Activated B cell treated with CpG ODN at 0.5 μM for 24 hours (primary cell): ENCODE measurements at regions of chr4 and their contacts with region 1.

Region 1: GRCh38 chr4:163544407-163545038 is 50.0 kb downstream of the TMA16 start:
- DNase-seq: peak; percentile 59
- ATAC-seq: peak; percentile 93
- H3K4me3 Mint-ChIP-seq: no peak overlapping the region
- H3K27ac Mint-ChIP-seq: no peak overlapping the region
- H3K4me1 Mint-ChIP-seq: peaks cover 30% of the 10 kb centered on the region
- H3K27me3 Mint-ChIP-seq: no peaks in the 10 kb centered on the region
- CTCF ChIP-seq: peak; percentile 58

Region 2: GRCh38 chr4:163048447-163048846 is 496.1 kb before region 1 on chr4:
- CTCF ChIA-PET with region 1: no interaction called
- POLR2A ChIA-PET with region 1: no interaction called
- intact Hi-C with region 1: loop called (anchors 1 kb)
- DNase-seq: no peak
- ATAC-seq: no peak
- H3K4me3 Mint-ChIP-seq: no peak overlapping the region
- H3K27ac Mint-ChIP-seq: no peak overlapping the region
- H3K4me1 Mint-ChIP-seq: no peaks in the 10 kb centered on the region
- H3K27me3 Mint-ChIP-seq: peaks cover 4% of the 10 kb centered on the region
- CTCF ChIP-seq: no peak

Region 3: GRCh38 chr4:163332500-163333406 is 211.8 kb before region 1 on chr4 and contains the start of gene NPY1R:
- CTCF ChIA-PET with region 1: no interaction called
- POLR2A ChIA-PET with region 1: no interaction called
- intact Hi-C with region 1: loop called (anchors 2 kb)
- DNase-seq: no peak
- ATAC-seq: no peak
- H3K4me3 Mint-ChIP-seq: peak within 1 kb of the TSS; percentile 71
- H3K27ac Mint-ChIP-seq: no peak within 1 kb of the TSS
- H3K4me1 Mint-ChIP-seq: peaks cover 18% of the 10 kb centered on the region
- H3K27me3 Mint-ChIP-seq: peaks cover 46% of the 10 kb centered on the region
- CTCF ChIP-seq: no peak
- total RNA-seq, gene NPY1R: not detected in 2 replicates

Region 4: GRCh38 chr4:163523791-163524365 is 20.6 kb before region 1 on chr4:
- CTCF ChIA-PET with region 1: interaction called, 11 read pairs
- POLR2A ChIA-PET with region 1: no interaction called
- intact Hi-C with region 1: loop called (anchors 2 kb)
- DNase-seq: no peak
- ATAC-seq: no peak
- H3K4me3 Mint-ChIP-seq: no peak overlapping the region
- H3K27ac Mint-ChIP-seq: no peak overlapping the region
- H3K4me1 Mint-ChIP-seq: peaks cover 6% of the 10 kb centered on the region
- H3K27me3 Mint-ChIP-seq: no peaks in the 10 kb centered on the region
- CTCF ChIP-seq: no peak

Region 5: DNA sequence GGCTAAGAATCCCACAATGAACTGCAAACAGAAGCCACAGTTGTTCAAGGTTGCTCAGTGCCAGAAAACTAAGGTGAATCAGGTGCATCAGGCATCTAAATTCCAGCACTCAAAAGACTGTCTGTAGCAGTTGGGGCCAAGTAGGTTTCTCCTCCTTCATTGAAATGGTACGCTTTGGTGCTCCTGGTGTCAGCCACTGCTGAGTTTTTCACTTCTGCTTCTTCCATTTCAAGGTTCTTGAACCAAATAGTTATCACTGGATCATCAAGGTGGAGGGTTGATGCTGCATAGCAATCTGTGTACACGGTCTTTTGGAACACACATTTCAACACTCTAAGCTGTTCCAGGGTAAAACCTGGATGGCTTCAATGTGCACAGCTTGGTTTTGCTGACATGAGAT is 24.3 kb after region 1 on chr4:
- CTCF ChIA-PET with region 1: no interaction called
- POLR2A ChIA-PET with region 1: no interaction called
- intact Hi-C with region 1: no loop called
- DNase-seq: no peak
- ATAC-seq: peak; percentile 91
- H3K4me3 Mint-ChIP-seq: peak overlapping the region; percentile 54
- H3K27ac Mint-ChIP-seq: peak overlapping the region; percentile 80
- H3K4me1 Mint-ChIP-seq: peaks cover 82% of the 10 kb centered on the region
- H3K27me3 Mint-ChIP-seq: no peaks in the 10 kb centered on the region
- CTCF ChIP-seq: no peak

Region 6: GRCh38 chr4:163681208-163681821 is 136.8 kb after region 1 on chr4:
- CTCF ChIA-PET with region 1: interaction called, 767 read pairs
- POLR2A ChIA-PET with region 1: interaction called, 13 read pairs
- intact Hi-C with region 1: no loop called
- DNase-seq: no peak
- ATAC-seq: peak; percentile 81
- H3K4me3 Mint-ChIP-seq: no peak overlapping the region
- H3K27ac Mint-ChIP-seq: peak overlapping the region; percentile 25
- H3K4me1 Mint-ChIP-seq: peaks cover 19% of the 10 kb centered on the region
- H3K27me3 Mint-ChIP-seq: peaks cover 3% of the 10 kb centered on the region
- CTCF ChIP-seq: no peak

Region 7: DNA sequence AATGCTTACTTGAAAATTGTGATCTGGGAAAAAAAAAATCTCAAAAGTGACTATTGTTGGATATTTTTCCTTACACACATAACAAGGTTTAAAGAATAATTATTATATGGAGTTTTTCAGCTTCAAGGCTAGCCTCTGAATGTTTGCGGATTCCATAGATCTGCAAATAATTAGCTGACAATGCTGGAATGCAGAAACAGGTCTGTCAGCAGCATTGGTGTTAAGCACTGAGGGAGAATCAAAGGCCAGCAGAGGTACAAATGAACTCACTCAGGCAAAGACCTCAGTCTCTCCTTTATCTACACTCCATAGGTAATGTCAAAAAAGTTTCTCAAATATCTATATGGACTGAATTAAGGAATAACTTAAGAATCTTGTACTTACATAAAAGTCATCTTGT is 1244.5 kb after region 1 on chr4:
- CTCF ChIA-PET with region 1: no interaction called
- POLR2A ChIA-PET with region 1: no interaction called
- intact Hi-C with region 1: no loop called
- DNase-seq: no peak
- ATAC-seq: no peak
- H3K4me3 Mint-ChIP-seq: no peak overlapping the region
- H3K27ac Mint-ChIP-seq: no peak overlapping the region
- H3K4me1 Mint-ChIP-seq: no peaks in the 10 kb centered on the region
- H3K27me3 Mint-ChIP-seq: no peaks in the 10 kb centered on the region
- CTCF ChIP-seq: no peak